HepG2 (cell line): ENCODE measurements at regions of chr20 and their contacts with region 1.

Region 1: DNA sequence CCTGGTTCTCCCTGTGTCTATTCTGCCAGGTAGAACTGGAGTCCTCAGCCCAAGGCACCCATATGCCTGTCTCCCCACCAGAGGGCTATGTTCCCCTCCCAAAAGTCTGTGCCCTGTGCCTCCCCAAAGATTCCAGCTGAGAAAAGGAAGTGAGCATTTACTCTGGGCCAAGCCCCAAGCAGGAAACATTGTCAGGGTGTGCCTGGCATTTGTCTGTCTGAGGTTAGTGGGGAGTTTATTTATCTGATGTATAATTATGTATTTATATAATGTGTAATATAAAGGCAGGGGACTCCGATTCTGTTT is 5.6 kb downstream of the GDF5 start:
- DNase-seq: no peak
- ATAC-seq: peak; percentile 21
- H3K4me3 ChIP-seq: peak overlapping the region; percentile 24 to 67 (median 29); a peak in 4 of 6 replicates
- H3K27ac ChIP-seq: no peak overlapping the region
- H3K4me1 ChIP-seq: peaks cover 43% of the 10 kb centered on the region
- H3K27me3 ChIP-seq: peaks cover 0 to 29% of the 10 kb centered on the region in 2 experiments; a peak in 3 of 5 replicates
- CTCF ChIP-seq: no peak
- EP300 ChIP-seq: no peak
- POLR2A ChIP-seq: no peak
- RAD21 ChIP-seq: no peak

Region 2: GRCh38 chr20:35344354-35344837 is 88.0 kb before region 1 on chr20:
- CTCF ChIA-PET with region 1: no interaction called
- POLR2A ChIA-PET with region 1: no interaction called
- in situ Hi-C with region 1: no loop called
- intact Hi-C with region 1: loop called (anchors 5 kb)
- DNase-seq: peak; percentile 92
- ATAC-seq: peak; percentile 81
- H3K4me3 ChIP-seq: no peak overlapping the region
- H3K27ac ChIP-seq: peak overlapping the region; percentile 1
- H3K4me1 ChIP-seq: peaks cover 14% of the 10 kb centered on the region
- H3K27me3 ChIP-seq: no peaks in the 10 kb centered on the region
- CTCF ChIP-seq: 0 out of 2 replicates have a peak, but pooled peaks have one; percentile 3
- EP300 ChIP-seq: peak in 1 of 2 experiments; percentile 36; a peak in 3 of 4 replicates
- POLR2A ChIP-seq: no peak
- RAD21 ChIP-seq: no peak

Region 3: GRCh38 chr20:35410613-35411012 is 21.8 kb before region 1 on chr20:
- CTCF ChIA-PET with region 1: no interaction called
- POLR2A ChIA-PET with region 1: interaction called, 11 read pairs
- in situ Hi-C with region 1: no loop called
- intact Hi-C with region 1: no loop called
- DNase-seq: no peak
- ATAC-seq: no peak
- H3K4me3 ChIP-seq: peak overlapping the region; percentile 75 to 91 (median 88)
- H3K27ac ChIP-seq: peak overlapping the region; percentile 61
- H3K4me1 ChIP-seq: peaks cover 21% of the 10 kb centered on the region
- H3K27me3 ChIP-seq: no peaks in the 10 kb centered on the region; a peak in 1 of 5 replicates
- CTCF ChIP-seq: no peak
- EP300 ChIP-seq: no peak
- POLR2A ChIP-seq: no peak
- RAD21 ChIP-seq: no peak

Region 4: GRCh38 chr20:35421322-35421721 is 11.1 kb before region 1 on chr20:
- CTCF ChIA-PET with region 1: no interaction called
- POLR2A ChIA-PET with region 1: no interaction called
- in situ Hi-C with region 1: no loop called
- intact Hi-C with region 1: loop called (anchors 2 kb)
- DNase-seq: no peak
- ATAC-seq: no peak
- H3K4me3 ChIP-seq: no peak overlapping the region
- H3K27ac ChIP-seq: no peak overlapping the region
- H3K4me1 ChIP-seq: no peaks in the 10 kb centered on the region
- H3K27me3 ChIP-seq: peaks cover 2 to 5% of the 10 kb centered on the region in 2 experiments; a peak in 2 of 5 replicates
- CTCF ChIP-seq: no peak
- EP300 ChIP-seq: no peak
- POLR2A ChIP-seq: no peak
- RAD21 ChIP-seq: no peak